ENCODE measurements at regions of chr6 and their contacts with region 1.

Region 1: GRCh38 chr6:52399511-52400312 is 20.4 kb upstream of the EFHC1 start:
- DNase-seq: peak; percentile 70
- H3K4me3 ChIP-seq: no peak overlapping the region
- H3K27ac ChIP-seq: no peak overlapping the region
- H3K4me1 ChIP-seq: peaks cover 9% of the 10 kb centered on the region
- H3K27me3 ChIP-seq: no peaks in the 10 kb centered on the region
- CTCF ChIP-seq: peak; percentile 70 to 87 (median 77)
- POLR2A ChIP-seq: no peak

Region 2: DNA sequence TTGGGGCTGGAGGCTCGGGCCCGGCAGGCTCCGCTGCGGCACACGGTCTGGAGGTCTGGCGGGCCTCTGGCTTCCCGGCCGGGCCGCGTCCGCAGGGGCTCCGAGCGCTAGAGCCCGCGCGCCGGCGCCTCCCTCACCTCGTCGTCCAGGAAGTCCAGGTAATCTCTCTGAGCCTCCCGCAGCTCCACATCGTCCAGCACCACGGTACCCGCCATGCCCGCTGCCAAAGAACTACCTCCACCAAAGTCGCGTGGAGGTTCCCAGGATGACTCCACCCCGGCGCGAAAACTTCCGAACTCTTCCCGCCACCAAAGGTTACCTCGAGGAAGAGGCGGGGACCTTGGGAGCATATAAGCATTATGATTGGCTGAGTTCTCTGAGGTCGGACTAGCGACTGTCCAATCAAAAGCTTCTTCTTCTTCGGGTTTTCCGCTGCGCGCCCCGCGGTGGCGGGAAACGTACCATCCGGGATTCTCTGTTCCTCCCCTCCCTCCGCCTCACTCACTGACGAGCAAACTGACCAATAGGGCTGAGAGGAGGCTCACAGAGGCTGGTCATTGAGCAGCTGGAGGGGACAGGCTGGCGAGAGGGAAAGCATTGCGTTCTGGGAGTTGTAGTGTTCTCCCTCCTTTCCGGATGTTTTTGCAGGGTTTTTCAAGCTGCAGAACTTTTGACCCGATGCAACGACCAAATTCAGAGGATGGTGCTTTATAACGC is 115.1 kb before region 1 on chr6 and contains the start of gene MCM3:
- intact Hi-C with region 1: loop called (anchors 10 kb)
- DNase-seq: peak; percentile 99
- H3K4me3 ChIP-seq: peak within 1 kb of the TSS; percentile 73 to 89
- H3K27ac ChIP-seq: peak within 1 kb of the TSS in 1 of 2 donors; percentile 59
- H3K4me1 ChIP-seq: peaks cover 12% of the 10 kb centered on the region
- H3K27me3 ChIP-seq: no peaks in the 10 kb centered on the region
- CTCF ChIP-seq: peak in 1 of 3 experiments; percentile 8
- POLR2A ChIP-seq: no peak
- total RNA-seq, gene MCM3: 53.4 to 55.9 TPM